PC-3 (cell line): ENCODE measurements at regions of chr4 and their contacts with region 1.

Region 1: DNA sequence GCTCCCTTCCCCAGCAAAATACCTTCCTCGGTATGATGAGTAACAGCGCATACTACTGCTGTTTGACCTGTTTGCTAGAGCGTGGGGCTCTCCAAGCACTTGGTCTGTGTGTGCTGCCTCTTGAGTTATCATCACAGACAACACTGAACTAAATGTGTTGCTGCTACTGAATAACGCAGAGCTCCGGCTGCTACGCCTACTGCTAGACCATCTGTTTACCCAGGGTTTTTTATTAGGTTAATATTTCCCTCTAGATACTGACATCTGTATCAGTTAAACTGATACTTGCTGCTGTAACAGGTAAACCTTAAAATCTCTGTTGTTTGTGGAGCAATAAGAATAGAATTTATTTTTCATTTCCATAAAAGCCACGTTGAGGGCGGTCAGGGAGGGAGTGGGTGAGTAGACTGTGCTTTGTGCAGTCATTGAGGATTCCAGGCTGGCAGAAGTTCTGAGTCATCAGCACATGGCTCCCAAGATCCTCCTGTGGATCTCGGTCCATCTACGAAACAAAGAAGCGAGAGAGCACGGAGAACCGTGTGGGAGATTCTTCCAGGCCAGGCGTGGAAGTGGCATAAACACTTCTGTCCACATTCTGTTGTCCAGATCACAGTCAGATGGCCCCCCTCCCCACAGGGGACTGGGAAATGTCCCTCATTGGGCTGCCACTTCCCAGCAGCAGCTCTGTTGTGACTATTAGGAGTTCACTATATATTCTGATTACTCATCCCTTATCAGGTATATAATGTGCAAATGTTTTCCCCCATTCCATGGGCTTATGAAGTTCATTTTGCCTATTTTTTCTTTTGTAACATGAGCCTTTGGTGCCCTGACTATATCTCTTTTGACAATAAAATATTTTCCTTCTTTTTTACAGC is 14.1 kb downstream of the GRK4 start:
- DNase-seq: peak; percentile 58
- ATAC-seq: peak; percentile 82
- H3K4me3 ChIP-seq: peak overlapping the region; percentile 25; the same call in 1 of the 2 replicates
- H3K27ac ChIP-seq: peak overlapping the region; percentile 89
- H3K4me1 ChIP-seq: peaks cover 18% of the 10 kb centered on the region
- H3K27me3 ChIP-seq: no peaks in the 10 kb centered on the region
- CTCF ChIP-seq: no peak

Region 2: GRCh38 chr4:2963175-2963965 is 14.1 kb before region 1 on chr4 and contains the starts of genes GRK4 and NOP14:
- CTCF ChIA-PET with region 1: interaction called, 5 read pairs
- POLR2A ChIA-PET with region 1: interaction called, 23 read pairs
- intact Hi-C with region 1: no loop called
- DNase-seq: peak; percentile 96
- ATAC-seq: peak; percentile 90
- H3K4me3 ChIP-seq: peak within 1 kb of the TSS; percentile 86
- H3K27ac ChIP-seq: peak within 1 kb of the TSS; percentile 59
- H3K4me1 ChIP-seq: peaks cover 6% of the 10 kb centered on the region; the same call in 1 of the 2 replicates
- H3K27me3 ChIP-seq: no peaks in the 10 kb centered on the region
- CTCF ChIP-seq: peak; percentile 27; the same call in 1 of the 2 replicates
- total RNA-seq, gene GRK4: 2.9 and 3.7 TPM in 2 replicates
- total RNA-seq, gene NOP14: 26.0 and 30.9 TPM in 2 replicates

Region 3: DNA sequence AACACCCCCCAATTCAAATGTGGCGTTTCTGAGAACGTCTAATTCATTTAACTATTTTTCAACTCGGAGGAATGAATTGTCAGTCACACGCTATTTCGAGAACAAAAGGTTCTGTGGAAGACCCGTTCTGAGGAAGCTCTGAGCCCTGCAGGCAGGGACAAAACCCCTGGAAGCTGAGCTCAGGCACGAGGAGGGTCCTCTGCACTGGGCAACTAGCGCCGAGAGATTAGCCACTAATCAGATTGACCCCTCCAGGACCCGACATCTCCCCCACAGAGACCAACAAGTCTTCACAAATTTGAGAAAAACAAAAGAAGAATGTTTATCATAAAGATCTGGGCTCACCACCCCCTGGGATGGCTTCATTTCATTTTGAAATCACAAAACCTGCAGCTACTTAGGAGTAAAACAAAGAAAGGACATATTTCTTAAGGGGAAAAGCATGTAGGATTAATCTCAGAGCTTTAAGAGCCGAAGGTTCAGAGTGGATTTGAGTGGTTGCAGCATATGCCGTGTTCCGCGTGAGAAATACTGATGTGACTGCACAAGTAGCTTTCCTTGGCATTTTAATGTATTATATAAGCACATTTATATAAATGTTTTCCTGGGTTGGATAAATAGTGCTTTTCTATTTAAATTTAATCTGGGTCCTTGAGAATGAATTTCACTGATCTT is 830.5 kb after region 1 on chr4:
- CTCF ChIA-PET with region 1: no interaction called
- POLR2A ChIA-PET with region 1: no interaction called
- intact Hi-C with region 1: no loop called
- DNase-seq: no peak
- ATAC-seq: no peak
- H3K4me3 ChIP-seq: no peak overlapping the region
- H3K27ac ChIP-seq: no peak overlapping the region
- H3K4me1 ChIP-seq: no peaks in the 10 kb centered on the region
- H3K27me3 ChIP-seq: peaks cover 17% of the 10 kb centered on the region
- CTCF ChIP-seq: no peak